ENCODE measurements at regions of chr7 and their contacts with region 1.

Region 1: GRCh38 chr7:148962823-148963582 is 65.3 kb downstream of the PDIA4 start:
- DNase-seq: peak; percentile 74 to 81 (median 80)
- H3K4me3 ChIP-seq: peak overlapping the region in 6 of 7 experiments; percentile 77 to 100 (median 90)
- H3K27ac ChIP-seq: peak overlapping the region; percentile 99
- H3K4me1 ChIP-seq: peaks cover 2 to 18% (median 7%) of the 10 kb centered on the region in 4 experiments
- H3K27me3 ChIP-seq: no peaks in the 10 kb centered on the region

Region 2: DNA sequence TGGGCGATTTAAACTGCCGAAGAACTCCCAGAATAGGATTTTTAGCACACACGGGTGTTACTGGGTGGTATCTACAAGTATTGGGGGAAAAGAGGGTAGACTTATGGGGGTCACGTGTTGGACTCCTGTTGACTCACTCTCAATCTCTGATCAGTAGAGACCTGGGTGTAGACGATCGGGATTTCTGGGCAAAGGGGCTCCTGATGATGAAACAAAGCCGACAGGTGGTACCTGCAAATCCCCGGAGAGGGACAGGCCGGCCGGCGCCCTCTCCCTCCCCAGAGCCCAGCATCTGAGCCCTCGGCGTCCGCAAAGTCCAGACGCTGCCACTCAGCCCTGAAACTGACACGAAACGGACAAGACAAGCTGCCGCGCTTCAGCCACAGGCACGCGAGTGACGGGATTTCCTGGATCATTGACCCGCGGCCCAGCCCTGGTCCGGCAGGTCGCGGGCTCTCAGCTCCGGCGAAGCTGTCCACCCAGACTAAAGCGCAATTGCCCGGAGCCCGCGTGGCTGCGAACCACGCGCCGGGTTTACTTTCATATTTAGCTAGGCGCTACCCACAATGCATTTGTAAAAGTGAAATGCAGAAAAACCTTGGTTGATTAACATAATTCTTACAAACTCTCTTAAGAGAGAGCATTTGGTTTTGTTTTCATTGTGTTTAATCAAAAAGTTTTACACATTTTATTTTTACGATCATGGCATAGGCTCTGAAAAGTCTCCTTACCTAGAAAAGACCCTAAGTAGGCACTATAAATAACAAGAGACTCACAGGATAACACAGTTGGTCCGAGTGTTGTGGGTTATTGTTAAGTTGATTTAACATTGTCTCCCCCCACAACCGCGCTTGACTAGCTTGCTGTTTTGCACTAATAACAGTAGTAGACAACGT is 22.1 kb before region 1 on chr7:
- CTCF ChIA-PET with region 1: interaction called, 13 read pairs
- POLR2A ChIA-PET with region 1: interaction called, 3 read pairs
- DNase-seq: peak; percentile 85 to 88 (median 85)
- H3K4me3 ChIP-seq: peak overlapping the region; percentile 70 to 99 (median 95)
- H3K27ac ChIP-seq: peak overlapping the region; percentile 98 to 99
- H3K4me1 ChIP-seq: peaks cover 2 to 23% (median 10%) of the 10 kb centered on the region in 4 experiments
- H3K27me3 ChIP-seq: no peaks in the 10 kb centered on the region

Region 3: DNA sequence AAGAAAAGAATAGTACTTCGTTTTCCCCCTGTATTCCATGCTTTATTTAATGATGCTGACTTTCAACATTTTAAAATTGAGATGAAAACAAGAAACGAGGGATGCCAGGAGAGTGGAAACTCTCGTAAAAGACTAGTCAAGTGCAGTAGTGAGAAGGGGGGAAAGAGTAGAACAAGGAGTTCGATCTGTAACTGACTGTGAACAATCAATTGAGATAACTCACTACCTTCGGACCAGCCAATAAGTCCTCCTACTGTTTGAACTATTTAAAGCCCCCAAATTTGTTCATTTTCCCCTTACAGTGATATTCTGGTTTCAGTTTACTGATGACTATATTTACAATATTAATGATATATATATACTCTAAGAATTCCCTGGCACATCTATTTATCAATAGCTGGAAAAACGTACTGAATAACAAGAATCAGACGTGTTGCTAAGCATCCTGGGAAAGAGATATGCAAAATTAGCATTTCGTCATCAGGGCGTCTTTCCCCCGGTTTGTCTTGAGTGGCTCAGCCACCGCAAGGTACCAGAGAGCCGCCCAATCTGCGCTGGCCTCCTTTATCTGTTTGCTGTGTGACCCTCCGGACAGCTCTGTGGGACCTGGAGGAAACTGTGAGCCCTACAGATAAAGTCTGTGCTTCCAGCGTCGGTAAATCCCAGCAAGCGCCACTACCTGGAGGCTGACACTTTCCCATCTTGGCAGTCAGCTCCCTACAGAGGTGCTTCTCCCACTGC is 24.2 kb after region 1 on chr7:
- CTCF ChIA-PET with region 1: interaction called, 24 read pairs
- POLR2A ChIA-PET with region 1: no interaction called
- DNase-seq: peak; percentile 91 to 96 (median 95)
- H3K4me3 ChIP-seq: peak overlapping the region; percentile 76 to 99 (median 91)
- H3K27ac ChIP-seq: peak overlapping the region; percentile 95 to 99
- H3K4me1 ChIP-seq: peaks cover 5 to 40% (median 21%) of the 10 kb centered on the region in 4 experiments
- H3K27me3 ChIP-seq: no peaks in the 10 kb centered on the region

Region 4: GRCh38 chr7:149257146-149257545 is 294.1 kb after region 1 on chr7:
- CTCF ChIA-PET with region 1: no interaction called
- POLR2A ChIA-PET with region 1: no interaction called
- DNase-seq: no peak
- H3K4me3 ChIP-seq: no peak overlapping the region
- H3K27ac ChIP-seq: no peak overlapping the region
- H3K4me1 ChIP-seq: peaks cover 0 to 9% (median 6%) of the 10 kb centered on the region in 4 experiments
- H3K27me3 ChIP-seq: no peaks in the 10 kb centered on the region